Head of caudate nucleus (tissue), 42 donors: ENCODE measurements at regions of chr3 and their contacts with region 1.

Region 1: DNA sequence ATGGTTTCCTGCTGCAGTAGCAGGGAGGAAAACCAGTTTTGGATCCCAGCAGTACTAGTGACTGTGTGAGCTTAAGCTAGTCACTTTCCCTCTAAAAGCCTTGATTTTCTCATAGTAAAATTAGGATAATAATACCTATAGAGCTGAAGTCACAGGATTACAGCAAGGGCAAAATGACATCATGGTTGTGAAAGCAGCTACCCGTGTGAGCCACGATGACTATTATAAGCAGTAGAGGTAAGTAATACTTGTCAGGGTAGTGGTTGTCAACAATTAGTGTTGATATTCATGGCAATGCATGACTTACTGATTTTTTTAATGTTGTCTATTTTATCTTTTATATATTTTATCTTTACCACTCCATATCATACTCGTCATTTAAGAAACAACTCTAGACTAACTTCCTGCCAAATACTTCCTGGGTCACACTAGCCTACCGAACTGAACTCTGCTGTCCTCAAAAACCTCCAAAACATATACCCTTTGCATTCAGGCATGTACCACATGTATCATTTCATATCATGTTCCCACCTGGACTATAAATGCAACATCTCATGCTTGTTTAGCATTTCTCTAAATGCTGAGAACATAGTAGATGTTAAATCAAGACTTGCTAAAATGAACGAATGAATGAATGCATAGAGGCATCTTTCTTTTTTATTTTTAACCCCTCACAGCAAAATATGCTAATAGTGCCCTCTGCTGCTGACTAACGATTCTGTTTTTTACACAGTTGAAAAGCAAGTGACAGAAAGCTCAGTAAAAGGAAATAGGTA is 172.6 kb downstream of the P3H2 start:
- DNase-seq: no peak

Region 2: GRCh38 chr3:189270248-189270832 is 677.8 kb before region 1 on chr3:
- intact Hi-C with region 1: loop called (anchors 10 kb)
- DNase-seq: peak in 41 of 42 donors; percentile 12 to 82 (median 53)

Region 3: DNA sequence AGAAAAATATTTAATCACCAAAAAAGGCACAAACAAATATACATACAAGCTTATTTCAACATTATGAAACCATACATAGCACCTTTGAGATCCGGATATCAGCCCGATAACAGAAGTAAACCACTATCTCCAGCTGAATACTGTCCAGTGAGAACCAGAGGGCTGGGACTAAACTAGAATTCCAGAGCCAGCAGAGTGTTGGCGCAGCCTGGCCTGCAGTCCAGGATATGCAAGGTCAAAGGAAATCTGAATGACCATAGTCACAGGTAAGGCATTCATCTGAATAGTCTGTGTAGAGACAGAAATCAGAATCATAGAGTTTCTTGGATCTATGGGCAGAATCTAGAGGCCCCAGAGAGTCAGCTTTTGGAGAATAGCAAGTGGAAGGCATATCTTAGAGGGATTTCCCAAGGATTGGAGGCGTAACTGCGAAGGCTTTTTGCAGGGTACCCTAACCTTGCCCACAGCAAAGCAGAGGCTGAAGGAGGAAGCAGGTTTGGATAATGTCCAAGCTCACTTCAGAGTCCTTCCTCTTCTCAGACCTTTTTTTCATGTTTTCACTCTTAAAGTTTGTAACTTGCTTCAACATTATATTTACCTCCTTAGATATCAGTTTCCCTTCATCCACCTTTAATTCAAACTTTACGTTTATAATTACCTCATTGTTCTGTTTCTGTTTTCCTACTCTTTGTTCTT is 349.5 kb before region 1 on chr3:
- intact Hi-C with region 1: no loop called
- DNase-seq: no peak

Region 4: DNA sequence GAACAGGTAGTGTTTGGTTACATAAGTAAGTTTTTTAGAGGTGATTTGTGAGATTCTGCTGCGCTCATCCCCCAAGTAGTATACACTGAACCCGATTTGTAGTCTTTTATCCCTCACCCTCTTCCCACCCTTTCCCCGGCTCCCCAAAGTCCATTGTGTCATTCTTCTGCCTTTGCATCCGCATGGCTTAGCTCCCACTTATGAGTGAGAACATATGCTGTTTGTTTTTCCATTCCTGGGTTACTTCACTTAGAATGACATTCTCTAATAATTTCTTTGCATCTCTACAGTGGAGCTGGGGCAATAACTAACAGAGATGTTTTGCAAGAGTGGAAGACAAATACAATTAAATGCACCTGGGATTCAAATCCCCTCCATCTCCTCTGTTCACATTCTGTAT is 223.8 kb before region 1 on chr3:
- intact Hi-C with region 1: no loop called
- DNase-seq: no peak

Region 5: DNA sequence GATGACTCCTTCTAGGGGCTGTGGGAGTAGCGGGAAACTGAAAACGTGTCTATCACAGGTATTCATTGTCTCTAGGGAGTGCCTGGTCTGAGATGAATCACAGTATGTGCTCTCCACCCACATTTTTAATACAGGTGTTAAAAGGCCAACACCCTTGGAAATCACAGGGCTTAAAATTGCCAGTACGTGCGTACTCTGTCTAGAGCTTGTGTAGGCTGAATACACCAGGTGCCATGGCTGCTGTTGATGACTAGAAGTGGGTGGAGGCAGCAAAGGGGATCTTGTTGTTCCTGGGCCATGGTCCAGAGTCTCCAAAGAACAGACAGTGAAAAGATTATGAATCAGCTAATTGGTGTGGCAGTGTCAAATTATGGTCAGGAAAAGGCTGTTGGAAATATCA is 207.6 kb after region 1 on chr3:
- intact Hi-C with region 1: no loop called
- DNase-seq: no peak